Posterior vena cava (tissue), 2 donors: ENCODE measurements at regions of chr11 and their contacts with region 1.

Region 1: GRCh38 chr11:118401151-118401878 is at the start of gene ATP5MG:
- DNase-seq: peak; percentile 97
- total RNA-seq, gene ATP5MG: 121 to 146 TPM

Region 2: DNA sequence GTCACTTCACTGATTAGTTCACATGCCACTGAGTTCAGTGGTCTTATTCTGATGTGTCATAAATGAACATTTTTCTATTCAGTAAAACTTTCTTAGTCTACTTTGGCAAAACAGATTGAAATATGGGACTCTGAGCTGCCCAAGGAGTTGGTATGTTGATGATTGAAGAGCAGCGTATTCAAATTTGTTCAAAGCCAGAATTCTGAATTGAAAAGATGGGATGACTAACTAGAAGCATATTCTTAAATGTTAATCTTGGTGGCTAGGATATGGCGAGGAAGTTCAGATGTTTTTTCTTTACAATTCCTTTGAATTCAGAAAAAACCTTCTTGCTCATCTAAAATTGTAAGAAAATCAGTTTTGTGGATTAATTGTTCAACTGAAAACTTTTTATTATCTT is 69.7 kb after region 1 on chr11:
- intact Hi-C with region 1: no loop called
- DNase-seq: no peak

Region 3: DNA sequence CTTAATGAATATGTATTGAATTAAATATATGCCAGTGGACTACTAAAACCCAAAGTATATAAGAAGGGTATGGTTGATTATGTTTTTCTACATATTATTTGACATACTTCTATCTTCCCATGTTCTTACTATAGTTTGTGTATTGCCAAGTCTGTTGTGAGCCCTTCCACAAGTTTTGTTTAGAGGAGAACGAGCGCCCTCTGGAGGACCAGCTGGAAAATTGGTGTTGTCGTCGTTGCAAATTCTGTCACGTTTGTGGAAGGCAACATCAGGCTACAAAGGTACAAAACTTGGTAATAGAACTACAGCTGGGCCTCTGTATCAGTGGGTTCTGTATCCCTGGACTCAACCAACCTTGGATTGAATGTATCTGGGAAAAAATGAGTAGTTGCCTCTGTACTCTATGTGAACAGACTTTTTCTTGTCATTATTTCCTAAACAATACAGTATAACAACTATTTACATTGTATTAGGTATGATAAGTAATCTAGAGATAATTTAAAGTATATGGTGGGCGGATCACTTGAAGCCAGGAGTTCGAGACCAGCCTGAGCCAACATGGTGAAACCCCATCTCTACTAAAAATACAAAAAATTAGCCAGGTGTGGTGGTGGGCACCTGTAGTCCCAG is 87.3 kb after region 1 on chr11:
- intact Hi-C with region 1: loop called (anchors 5 to 10 kb)
- DNase-seq: no peak

Region 4: DNA sequence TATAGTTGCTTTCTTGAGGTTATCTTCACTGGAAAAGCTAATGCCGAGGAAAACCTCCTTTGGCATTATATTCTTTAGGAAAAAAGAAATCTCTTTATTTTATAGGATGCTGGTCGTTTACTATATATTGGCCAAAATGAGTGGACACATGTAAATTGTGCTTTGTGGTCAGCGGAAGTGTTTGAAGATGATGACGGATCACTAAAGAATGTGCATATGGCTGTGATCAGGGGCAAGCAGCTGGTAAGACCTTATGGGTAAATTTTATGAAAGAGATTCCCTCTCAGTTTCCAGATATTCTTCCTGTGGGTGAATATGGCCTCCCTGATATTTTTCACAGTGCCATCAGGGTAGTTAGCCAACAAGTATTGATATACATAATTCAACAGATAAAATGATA is 96.5 kb after region 1 on chr11:
- intact Hi-C with region 1: loop called in 1 of 2 experiments (anchors 10 kb)
- DNase-seq: no peak